ENCODE measurements at regions of chr1 and their contacts with region 1.

Region 1: GRCh38 chr1:8727809-8728213 is 89.6 kb downstream of the RERE start:
- DNase-seq: no peak
- H3K4me3 ChIP-seq: no peak overlapping the region
- H3K4me3 Mint-ChIP-seq: no peak overlapping the region
- H3K27ac ChIP-seq: no peak overlapping the region
- H3K27ac Mint-ChIP-seq: peak overlapping the region in 3 of 8 donors; percentile 12 to 42 (median 21)
- H3K4me1 ChIP-seq: no peaks in the 10 kb centered on the region
- H3K4me1 Mint-ChIP-seq: peaks cover 3 to 8% (median 4%) of the 10 kb centered on the region in 3 donors
- H3K27me3 ChIP-seq: no peaks in the 10 kb centered on the region
- H3K27me3 Mint-ChIP-seq: no peaks in the 10 kb centered on the region

Region 2: DNA sequence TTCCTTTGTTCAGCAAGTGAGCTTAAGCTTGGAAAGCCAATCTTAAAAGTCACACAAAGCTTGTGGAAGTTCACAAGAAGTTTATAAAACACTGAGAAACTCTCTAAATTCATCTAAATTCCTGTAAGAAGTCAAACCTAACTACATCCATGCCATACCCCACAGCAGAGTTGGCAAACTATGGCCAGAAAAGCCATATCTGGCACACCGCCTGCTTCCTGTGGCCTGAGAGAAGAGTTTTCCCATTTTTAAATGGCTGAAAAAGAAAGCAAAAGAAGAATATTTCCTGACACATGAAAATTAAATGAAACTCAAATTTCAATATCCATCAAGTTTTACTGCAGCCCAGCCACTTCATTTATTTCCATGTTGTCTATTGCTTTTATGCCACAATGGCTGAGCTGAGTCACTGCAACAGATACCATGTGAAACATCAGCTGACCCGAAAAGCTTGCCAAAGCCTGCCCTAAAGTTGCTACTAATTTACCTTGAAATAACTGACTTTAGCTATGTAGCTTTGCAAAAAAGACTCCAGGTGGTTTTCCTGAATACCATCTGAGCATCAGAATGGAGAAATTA is 172.8 kb before region 1 on chr1:
- CTCF ChIA-PET with region 1: interaction called, 18 read pairs
- POLR2A ChIA-PET with region 1: no interaction called
- DNase-seq: no peak
- H3K4me3 ChIP-seq: no peak overlapping the region
- H3K4me3 Mint-ChIP-seq: no peak overlapping the region
- H3K27ac ChIP-seq: no peak overlapping the region
- H3K27ac Mint-ChIP-seq: no peak overlapping the region
- H3K4me1 ChIP-seq: peaks cover 4% of the 10 kb centered on the region
- H3K4me1 Mint-ChIP-seq: peaks cover 8 to 16% (median 9%) of the 10 kb centered on the region in 3 donors
- H3K27me3 ChIP-seq: no peaks in the 10 kb centered on the region
- H3K27me3 Mint-ChIP-seq: no peaks in the 10 kb centered on the region

Region 3: DNA sequence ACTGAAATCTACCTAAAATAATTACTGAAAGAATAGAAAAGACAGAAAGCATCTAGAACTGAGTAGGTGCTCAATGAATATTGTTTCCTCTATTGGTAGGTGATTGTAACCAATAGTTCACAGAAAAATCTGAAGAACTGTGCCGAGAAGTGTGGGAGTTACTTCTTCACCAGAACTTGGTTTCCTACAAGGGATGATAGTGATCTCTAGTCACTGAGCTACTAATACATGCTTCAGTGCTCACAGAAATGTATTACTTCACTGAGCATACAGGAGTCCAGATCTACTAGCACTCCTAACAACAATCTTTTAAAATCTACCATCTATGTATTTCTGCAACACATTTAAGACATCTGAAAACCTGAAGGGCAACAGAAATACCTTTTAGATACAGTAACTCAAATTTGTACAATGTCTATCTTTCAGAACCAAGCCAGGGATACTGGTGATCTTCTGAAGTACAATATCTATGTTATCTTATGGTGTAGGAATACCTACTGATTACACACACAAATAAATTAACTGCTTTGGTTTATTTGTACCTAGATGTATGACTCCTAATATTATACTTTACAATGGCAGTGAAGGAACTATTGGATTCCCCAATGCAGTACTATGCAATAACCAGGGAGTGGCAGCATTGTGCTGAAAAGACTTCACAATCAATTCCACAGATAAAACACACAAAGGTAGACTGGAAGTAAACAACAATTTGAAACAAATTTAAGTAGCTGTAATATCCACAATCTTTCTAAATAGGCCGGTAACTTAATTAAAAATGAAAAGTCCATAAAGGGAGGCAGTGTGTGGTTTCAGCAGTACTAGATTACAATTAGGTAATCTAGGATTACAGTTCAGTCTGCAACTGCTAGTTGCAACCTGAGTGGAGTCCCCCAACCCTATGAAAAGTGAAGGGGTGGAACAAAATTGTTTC is 166.9 kb before region 1 on chr1:
- CTCF ChIA-PET with region 1: interaction called, 68 read pairs
- POLR2A ChIA-PET with region 1: no interaction called
- DNase-seq: peak in 4 of 5 donors; percentile 13 to 53 (median 38)
- H3K4me3 ChIP-seq: no peak overlapping the region
- H3K4me3 Mint-ChIP-seq: no peak overlapping the region
- H3K27ac ChIP-seq: no peak overlapping the region
- H3K27ac Mint-ChIP-seq: no peak overlapping the region
- H3K4me1 ChIP-seq: no peaks in the 10 kb centered on the region
- H3K4me1 Mint-ChIP-seq: peaks cover 2 to 6% (median 4%) of the 10 kb centered on the region in 3 donors
- H3K27me3 ChIP-seq: no peaks in the 10 kb centered on the region
- H3K27me3 Mint-ChIP-seq: no peaks in the 10 kb centered on the region